HEK293 (cell line): ENCODE measurements at regions of chr19 and their contacts with region 1.

Region 1: GRCh38 chr19:51777570-51778462 is 16.8 kb downstream of the FPR2 start:
- H3K4me3 ChIP-seq: no peak overlapping the region
- H3K27ac ChIP-seq: no peak overlapping the region
- H3K4me1 ChIP-seq: no peaks in the 10 kb centered on the region
- CTCF ChIP-seq: peak; percentile 38; the same call in 1 of the 2 replicates

Region 2: DNA sequence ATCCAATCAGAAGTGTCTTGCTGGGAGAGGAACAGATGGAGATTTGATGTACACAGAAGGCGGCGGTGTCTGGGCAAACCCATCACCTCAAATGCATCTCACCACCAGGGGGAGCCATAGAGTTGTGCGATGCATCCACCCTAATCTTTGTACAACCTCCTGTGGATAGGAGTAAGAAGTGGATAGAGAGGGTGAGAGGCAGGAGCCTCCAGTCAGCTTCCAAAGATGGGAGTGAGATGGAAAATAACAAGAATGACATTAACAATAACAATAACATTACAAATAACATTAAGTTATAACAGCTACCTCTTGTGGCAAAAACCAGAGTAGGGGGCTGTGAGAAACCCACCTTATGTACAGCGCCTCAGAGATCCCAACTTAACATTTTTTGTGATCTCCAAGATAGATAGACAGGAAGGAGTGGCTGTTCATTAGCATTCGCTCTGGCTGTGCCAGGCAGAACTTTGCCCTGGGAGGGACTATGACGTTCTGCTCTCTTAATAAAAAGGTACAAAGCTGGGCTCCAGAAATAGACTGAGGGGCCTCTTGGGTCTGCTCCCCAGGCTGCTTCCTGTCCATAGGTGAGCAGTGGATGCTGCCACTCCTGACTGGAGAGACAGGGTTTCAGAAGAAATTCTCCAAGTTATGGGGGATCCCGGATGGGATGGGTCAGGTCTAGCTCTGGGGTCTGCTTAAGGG is 304.7 kb before region 1 on chr19:
- CTCF ChIA-PET with region 1: interaction called, 29 read pairs
- POLR2A ChIA-PET with region 1: no interaction called
- H3K4me3 ChIP-seq: no peak overlapping the region
- H3K27ac ChIP-seq: no peak overlapping the region
- H3K4me1 ChIP-seq: no peaks in the 10 kb centered on the region
- CTCF ChIP-seq: peak; percentile 71

Region 3: GRCh38 chr19:51607920-51608562 is 169.8 kb before region 1 on chr19:
- CTCF ChIA-PET with region 1: interaction called, 25 read pairs
- POLR2A ChIA-PET with region 1: no interaction called
- H3K4me3 ChIP-seq: no peak overlapping the region
- H3K27ac ChIP-seq: no peak overlapping the region
- H3K4me1 ChIP-seq: no peaks in the 10 kb centered on the region
- CTCF ChIP-seq: peak; percentile 57

Region 4: DNA sequence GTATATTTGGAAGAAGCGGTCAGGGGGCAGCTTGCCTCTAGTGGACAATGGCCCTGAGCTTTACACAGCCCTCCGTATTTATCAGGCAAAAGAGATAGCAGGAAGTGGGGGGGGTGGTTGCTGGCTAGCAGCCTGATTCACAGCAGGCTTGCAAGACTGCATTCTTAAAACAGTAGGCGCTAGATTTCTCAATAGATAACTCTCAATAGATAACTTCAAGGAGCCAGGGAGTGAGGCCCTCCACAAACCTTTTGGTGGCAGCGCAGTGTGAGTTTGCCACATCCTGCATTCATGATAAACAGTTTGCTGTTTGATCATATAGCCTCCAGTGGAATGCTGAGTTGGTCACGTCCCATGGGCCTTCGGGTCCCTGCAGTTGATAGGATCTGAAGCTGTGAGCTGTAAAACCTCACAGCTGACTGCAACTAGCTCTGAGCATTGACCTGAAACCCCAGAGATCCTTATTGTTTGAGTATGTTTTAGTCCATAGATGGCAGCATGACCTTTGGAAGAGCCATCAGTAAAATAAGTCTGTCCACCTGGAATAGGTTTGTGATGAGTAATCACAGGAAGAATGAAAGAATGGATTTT is 29.4 kb after region 1 on chr19:
- CTCF ChIA-PET with region 1: interaction called, 19 read pairs
- POLR2A ChIA-PET with region 1: no interaction called
- H3K4me3 ChIP-seq: no peak overlapping the region
- H3K27ac ChIP-seq: no peak overlapping the region
- H3K4me1 ChIP-seq: no peaks in the 10 kb centered on the region
- CTCF ChIP-seq: no peak